Dorsolateral prefrontal cortex (tissue), 120 donors: ENCODE measurements at regions of chr9 and their contacts with region 1.

Region 1: GRCh38 chr9:6305954-6306563 is 22.1 kb upstream of the TPD52L3 start:
- DNase-seq: no peak
- H3K4me3 ChIP-seq: no peak overlapping the region
- H3K27ac ChIP-seq: no peak overlapping the region
- H3K27me3 ChIP-seq: peaks cover 0 to 9% (median 0%) of the 10 kb centered on the region in 45 donors
- CTCF ChIP-seq: peak; percentile 23 to 88 (median 71)

Region 2: DNA sequence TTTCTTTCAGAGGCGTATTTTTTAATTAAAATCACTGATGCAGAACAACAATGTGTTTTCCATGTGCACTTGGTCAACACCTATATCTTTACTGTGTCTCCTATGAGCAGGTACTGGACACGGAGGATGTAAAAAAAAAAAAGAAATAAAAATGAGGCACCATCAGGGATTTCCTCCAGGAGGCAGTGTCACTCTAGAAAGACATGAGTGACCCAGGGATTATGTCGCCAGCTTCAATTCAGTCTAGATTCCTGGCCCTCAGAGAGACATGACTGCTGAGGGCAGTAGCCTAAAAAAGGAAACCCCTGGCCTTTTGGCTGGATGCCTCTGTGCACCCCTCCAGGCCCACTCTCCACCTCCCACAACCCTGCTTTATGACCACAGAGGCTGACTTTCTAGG is 108.7 kb before region 1 on chr9:
- intact Hi-C with region 1: loop called in 1 of 2 experiments (anchors 2 kb)
- DNase-seq: no peak
- H3K4me3 ChIP-seq: no peak overlapping the region
- H3K27ac ChIP-seq: no peak overlapping the region
- H3K27me3 ChIP-seq: no peaks in the 10 kb centered on the region
- CTCF ChIP-seq: peak in 45 of 56 donors; percentile 16 to 65 (median 39)